H1 (cell line): ENCODE measurements at regions of chr15 and their contacts with region 1.

Region 1: DNA sequence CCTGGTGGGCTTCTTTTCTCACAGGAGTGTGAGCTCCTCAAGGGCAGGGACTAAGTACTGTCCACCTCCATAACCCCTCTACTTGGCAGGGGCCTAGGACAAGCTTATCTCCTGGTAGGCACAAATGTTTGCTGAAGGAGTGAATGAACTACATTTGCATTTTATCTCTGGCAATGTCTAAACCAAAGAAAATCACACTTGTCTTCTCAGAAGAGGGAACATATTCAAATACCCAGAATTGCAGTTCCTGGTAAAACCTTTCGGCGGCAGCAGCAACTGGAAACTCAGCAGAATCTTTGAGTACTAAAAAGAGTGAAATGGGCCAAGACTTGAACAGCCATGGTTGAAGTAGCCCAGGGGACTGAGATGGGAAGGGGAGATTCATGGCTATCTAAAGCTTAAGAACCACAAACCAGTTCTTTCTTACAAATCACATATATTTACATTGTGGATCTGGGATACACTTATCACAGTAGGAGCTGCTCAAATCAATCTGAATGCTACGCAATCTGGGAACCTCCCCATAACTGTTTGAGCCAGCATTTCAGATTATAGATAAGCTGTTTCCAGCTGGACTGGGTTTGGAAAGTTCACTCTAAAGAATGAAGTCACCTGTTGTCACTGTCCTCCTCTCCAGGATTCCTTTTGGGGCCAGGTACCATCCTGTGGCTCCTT is 18.7 kb upstream of the PTPN9 start:
- DNase-seq: no peak
- H3K4me3 ChIP-seq: no peak overlapping the region
- H3K27ac ChIP-seq: no peak overlapping the region
- H3K4me1 ChIP-seq: no peaks in the 10 kb centered on the region
- H3K27me3 ChIP-seq: no peaks in the 10 kb centered on the region
- CTCF ChIP-seq: peak in 2 of 3 experiments; percentile 39 to 52; a peak in 3 of 4 replicates
- EP300 ChIP-seq: no peak
- POLR2A ChIP-seq: no peak
- RAD21 ChIP-seq: peak; percentile 42 to 56

Region 2: DNA sequence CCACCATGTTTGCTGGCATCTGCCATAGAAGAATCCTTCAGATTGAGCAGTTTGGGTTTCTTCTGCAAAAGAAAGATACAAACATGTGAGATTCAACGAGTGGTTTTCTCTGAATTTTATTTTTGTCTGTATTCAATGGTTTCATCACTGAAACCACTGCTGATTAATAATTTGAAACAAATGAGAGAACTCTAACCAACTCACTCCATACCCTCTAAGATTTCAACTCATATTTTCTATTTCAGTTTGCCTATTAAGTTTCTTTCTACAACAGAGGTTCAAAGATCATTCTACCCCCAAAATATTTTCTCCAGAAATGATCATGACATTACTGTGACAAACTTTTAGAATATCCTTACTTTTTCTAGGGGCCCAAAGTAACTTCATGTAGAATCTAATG is 190.7 kb before region 1 on chr15:
- CTCF ChIA-PET with region 1: no interaction called
- POLR2A ChIA-PET with region 1: no interaction called
- DNase-seq: no peak
- H3K4me3 ChIP-seq: no peak overlapping the region
- H3K27ac ChIP-seq: no peak overlapping the region
- H3K4me1 ChIP-seq: no peaks in the 10 kb centered on the region
- H3K27me3 ChIP-seq: no peaks in the 10 kb centered on the region
- CTCF ChIP-seq: no peak
- EP300 ChIP-seq: no peak
- POLR2A ChIP-seq: no peak
- RAD21 ChIP-seq: no peak

Region 3: GRCh38 chr15:75573643-75574384 is 24.0 kb before region 1 on chr15:
- CTCF ChIA-PET with region 1: interaction called, 10 read pairs
- POLR2A ChIA-PET with region 1: interaction called, 8 read pairs
- DNase-seq: no peak
- H3K4me3 ChIP-seq: peak overlapping the region in 1 of 4 experiments; percentile 34; a peak in 2 of 8 replicates
- H3K27ac ChIP-seq: no peak overlapping the region
- H3K4me1 ChIP-seq: peaks cover 7 to 14% (median 10%) of the 10 kb centered on the region in 4 experiments
- H3K27me3 ChIP-seq: no peaks in the 10 kb centered on the region
- CTCF ChIP-seq: no peak
- EP300 ChIP-seq: no peak
- POLR2A ChIP-seq: no peak
- RAD21 ChIP-seq: no peak

Region 4: GRCh38 chr15:75578948-75579920 is 18.6 kb before region 1 on chr15 and contains the start of gene PTPN9:
- CTCF ChIA-PET with region 1: interaction called, 23 read pairs
- POLR2A ChIA-PET with region 1: interaction called, 8 read pairs
- DNase-seq: peak; percentile 69 to 86
- H3K4me3 ChIP-seq: peak within 1 kb of the TSS; percentile 92 to 96 (median 94)
- H3K27ac ChIP-seq: peak within 1 kb of the TSS; percentile 76; the same call in 1 of the 2 replicates
- H3K4me1 ChIP-seq: peaks cover 2 to 6% (median 4%) of the 10 kb centered on the region in 4 experiments; a peak in 6 of 7 replicates
- H3K27me3 ChIP-seq: no peaks in the 10 kb centered on the region
- CTCF ChIP-seq: peak in 2 of 3 experiments; percentile 40 to 47; a peak in 3 of 4 replicates
- EP300 ChIP-seq: peak in 1 of 2 experiments; percentile 66; a peak in 1 of 3 replicates
- POLR2A ChIP-seq: peak; percentile 47 to 71
- RAD21 ChIP-seq: peak in 1 of 2 experiments; percentile 23; a peak in 1 of 4 replicates
- total RNA-seq, gene PTPN9: 44.5 and 46.6 TPM in 2 replicates

Region 5: DNA sequence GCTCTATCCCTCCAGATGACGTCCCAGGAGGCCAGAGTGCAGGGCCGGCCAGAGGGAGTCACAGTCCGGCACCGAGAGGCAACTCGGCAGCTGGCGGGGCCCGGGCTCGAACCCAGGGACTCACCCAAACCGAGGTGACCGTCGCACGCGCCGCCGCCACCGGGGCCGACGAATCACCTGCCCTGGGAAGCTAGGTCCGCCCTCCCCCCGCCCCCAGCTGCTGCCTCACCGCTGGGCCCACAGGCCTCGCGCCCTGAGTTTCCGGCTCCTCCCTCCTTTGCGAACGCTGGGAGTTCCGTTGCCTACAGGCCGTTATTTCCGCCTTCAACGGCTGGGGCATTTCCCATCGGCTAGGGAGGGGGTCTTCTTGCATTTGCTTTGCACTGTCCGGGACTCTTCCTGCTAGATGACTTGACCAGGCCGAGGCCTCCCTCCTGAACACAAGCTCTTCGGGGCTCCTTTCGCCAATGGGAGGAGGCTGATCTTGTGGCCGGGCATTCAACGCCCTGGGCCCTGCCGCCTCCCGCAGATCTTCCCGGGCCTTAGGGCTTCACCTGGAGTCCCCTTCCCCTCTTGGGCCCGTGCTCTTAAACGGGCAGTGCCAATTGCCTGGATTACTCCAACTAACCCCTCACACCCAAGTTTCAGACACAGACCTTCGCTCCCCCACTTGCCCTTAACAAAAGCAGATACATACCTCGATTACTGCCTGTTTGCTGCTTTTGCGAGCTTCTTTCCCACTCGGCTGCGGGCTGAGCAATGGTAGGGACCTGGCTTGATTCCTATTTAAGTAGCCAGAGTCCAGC is 27.9 kb after region 1 on chr15 and contains the start of gene SNUPN:
- CTCF ChIA-PET with region 1: interaction called, 13 read pairs
- POLR2A ChIA-PET with region 1: no interaction called
- DNase-seq: peak; percentile 90 to 94
- H3K4me3 ChIP-seq: peak within 1 kb of the TSS; percentile 71 to 100 (median 93)
- H3K27ac ChIP-seq: peak within 1 kb of the TSS; percentile 89; the same call in 1 of the 2 replicates
- H3K4me1 ChIP-seq: peaks cover 0 to 3% (median 0%) of the 10 kb centered on the region in 4 experiments; a peak in 3 of 7 replicates
- H3K27me3 ChIP-seq: no peaks in the 10 kb centered on the region
- CTCF ChIP-seq: no peak
- EP300 ChIP-seq: no peak
- POLR2A ChIP-seq: no peak
- RAD21 ChIP-seq: no peak
- total RNA-seq, gene SNUPN: 26.2 and 28.2 TPM in 2 replicates

Region 6: GRCh38 chr15:75672646-75673425 is 75.0 kb after region 1 on chr15:
- CTCF ChIA-PET with region 1: interaction called, 10 read pairs
- POLR2A ChIA-PET with region 1: interaction called, 4 read pairs
- DNase-seq: no peak
- H3K4me3 ChIP-seq: no peak overlapping the region
- H3K27ac ChIP-seq: no peak overlapping the region
- H3K4me1 ChIP-seq: peaks cover 7 to 14% (median 9%) of the 10 kb centered on the region in 4 experiments
- H3K27me3 ChIP-seq: no peaks in the 10 kb centered on the region
- CTCF ChIP-seq: no peak
- EP300 ChIP-seq: no peak
- POLR2A ChIP-seq: no peak
- RAD21 ChIP-seq: no peak